Heart right ventricle (tissue), 16 donors: ENCODE measurements at regions of chr17 and their contacts with region 1.

Region 1: DNA sequence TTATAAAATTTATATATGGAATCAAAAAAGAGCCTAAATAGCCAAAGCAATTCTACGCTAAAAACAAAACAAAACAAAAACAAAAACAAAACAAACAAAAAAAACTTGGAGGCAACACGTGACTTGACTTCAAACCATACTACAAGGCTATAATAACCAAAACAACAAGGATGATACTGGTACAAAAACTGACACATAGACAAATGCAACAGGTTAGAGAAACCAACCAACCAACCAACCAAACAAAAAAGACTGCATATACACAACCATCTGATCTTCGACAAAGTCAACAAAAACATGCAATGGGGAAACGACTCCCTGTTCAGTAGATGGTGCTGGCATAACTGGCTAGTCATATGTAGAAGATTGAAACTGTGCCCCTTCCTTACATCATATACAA is 380.3 kb upstream of the KIF2B start:
- DNase-seq: no peak
- ATAC-seq: no peak
- H3K4me3 ChIP-seq: no peak overlapping the region
- H3K27ac ChIP-seq: no peak overlapping the region
- H3K4me1 ChIP-seq: no peaks in the 10 kb centered on the region
- H3K27me3 ChIP-seq: no peaks in the 10 kb centered on the region
- CTCF ChIP-seq: no peak

Region 2: GRCh38 chr17:53420035-53420641 is 22.3 kb before region 1 on chr17:
- intact Hi-C with region 1: no loop called
- DNase-seq: no peak
- ATAC-seq: no peak
- H3K4me3 ChIP-seq: no peak overlapping the region
- H3K27ac ChIP-seq: no peak overlapping the region
- H3K4me1 ChIP-seq: no peaks in the 10 kb centered on the region
- H3K27me3 ChIP-seq: no peaks in the 10 kb centered on the region
- CTCF ChIP-seq: no peak

Region 3: GRCh38 chr17:53499277-53499676 is 56.8 kb after region 1 on chr17:
- intact Hi-C with region 1: loop called in 1 of 10 experiments (anchors 10 kb)
- DNase-seq: no peak
- ATAC-seq: no peak
- H3K4me3 ChIP-seq: no peak overlapping the region
- H3K27ac ChIP-seq: no peak overlapping the region
- H3K4me1 ChIP-seq: no peaks in the 10 kb centered on the region
- H3K27me3 ChIP-seq: no peaks in the 10 kb centered on the region
- CTCF ChIP-seq: no peak